ENCODE measurements at regions of chr5 and their contacts with region 1.

Region 1: DNA sequence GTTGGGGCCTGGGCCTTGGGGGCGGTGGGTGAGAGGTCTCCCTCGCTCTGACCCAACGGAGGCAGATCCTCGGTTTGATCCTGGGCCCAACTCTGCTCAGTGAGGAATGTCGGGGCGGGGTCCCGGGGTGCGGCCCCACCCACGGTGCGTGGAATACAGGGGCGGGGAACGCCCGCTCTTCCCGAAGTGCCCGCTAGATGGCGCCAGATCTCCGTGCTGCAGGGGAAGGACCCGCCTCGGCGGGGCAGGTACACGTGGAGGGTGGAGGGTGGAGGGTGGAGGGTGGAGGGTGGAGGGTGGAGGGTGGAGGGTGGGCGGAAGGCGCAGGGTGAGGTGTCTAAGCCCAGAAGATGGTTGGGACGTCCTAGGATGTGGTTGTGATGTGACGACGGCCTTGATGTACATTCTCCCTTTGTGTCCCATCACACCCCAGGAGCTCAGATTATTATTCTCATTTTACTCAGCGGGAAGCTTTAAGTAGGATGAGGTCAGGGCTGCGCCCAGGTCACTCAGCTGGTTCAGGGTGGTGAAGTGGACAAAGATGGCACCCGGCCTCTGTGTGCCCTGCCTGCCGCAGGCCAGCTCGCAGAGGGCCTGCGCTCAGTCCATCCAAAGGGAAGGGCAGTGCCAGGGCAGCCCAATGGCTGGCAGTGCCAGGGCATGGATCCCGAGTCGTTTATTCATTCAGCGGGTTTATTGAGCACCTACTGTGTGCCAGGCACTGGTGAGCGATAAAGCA is 9.4 kb upstream of the RPS14 start:
- DNase-seq: peak; percentile 58 to 68 (median 60)
- H3K4me3 ChIP-seq: no peak overlapping the region
- H3K4me3 Mint-ChIP-seq: peak overlapping the region in 1 of 2 donors; percentile 60
- H3K27ac ChIP-seq: no peak overlapping the region
- H3K27ac Mint-ChIP-seq: peak overlapping the region in 4 of 7 donors; percentile 4 to 82 (median 24)
- H3K4me1 ChIP-seq: peaks cover 28 to 29% of the 10 kb centered on the region in 2 donors
- H3K4me1 Mint-ChIP-seq: peaks cover 32% of the 10 kb centered on the region
- H3K27me3 ChIP-seq: no peaks in the 10 kb centered on the region
- H3K27me3 Mint-ChIP-seq: peaks cover 2 to 7% (median 5%) of the 10 kb centered on the region in 3 donors
- CTCF ChIP-seq: peak; percentile 80

Region 2: DNA sequence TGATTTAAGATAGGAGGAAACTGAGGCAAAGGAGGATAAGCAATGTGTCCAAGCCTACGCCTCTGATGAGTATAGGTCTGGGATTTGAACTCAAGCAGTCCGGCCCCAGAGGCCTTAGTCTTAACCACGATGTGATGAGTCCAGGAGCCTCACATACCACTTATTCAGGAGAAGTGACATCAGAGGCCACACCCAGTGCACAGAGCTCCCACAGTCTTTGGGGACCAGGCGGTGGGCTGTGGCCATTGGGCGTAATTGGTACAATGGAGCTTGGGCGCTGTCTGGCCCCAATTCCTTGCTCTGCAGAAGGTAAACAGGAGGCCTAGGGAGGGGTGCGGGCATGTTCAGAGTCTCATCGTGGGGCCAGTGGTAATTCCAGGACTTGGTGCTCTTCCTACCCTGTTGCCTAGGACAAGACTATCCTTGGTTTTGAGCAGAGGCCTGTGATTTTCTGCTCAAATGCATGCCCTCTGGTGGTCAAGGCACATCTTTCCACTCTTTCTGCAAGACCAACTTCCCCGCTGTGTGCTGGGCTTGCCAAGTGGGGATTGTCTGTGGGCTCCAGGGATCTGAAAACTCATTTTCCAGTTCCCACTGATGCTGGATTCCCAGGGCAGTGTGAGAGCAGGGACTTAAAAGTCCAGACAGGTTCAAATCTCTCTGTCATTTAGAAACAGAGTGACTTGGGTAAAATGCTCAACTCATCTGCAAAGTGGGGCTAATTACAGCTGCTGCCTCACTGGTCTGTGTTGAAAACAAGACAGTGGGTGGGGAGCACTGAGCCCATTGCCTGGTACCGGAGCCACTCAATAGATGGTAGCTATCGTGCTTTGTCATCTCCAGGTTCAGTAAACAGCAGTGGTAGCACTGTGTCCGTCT is 64.7 kb after region 1 on chr5:
- intact Hi-C with region 1: loop called (anchors 1 to 5 kb)
- DNase-seq: peak; percentile 44 to 64 (median 55)
- H3K4me3 ChIP-seq: no peak overlapping the region
- H3K4me3 Mint-ChIP-seq: no peak overlapping the region
- H3K27ac ChIP-seq: no peak overlapping the region
- H3K27ac Mint-ChIP-seq: peak overlapping the region in 2 of 7 donors; percentile 76
- H3K4me1 ChIP-seq: no peaks in the 10 kb centered on the region
- H3K4me1 Mint-ChIP-seq: peaks cover 13% of the 10 kb centered on the region
- H3K27me3 ChIP-seq: no peaks in the 10 kb centered on the region
- H3K27me3 Mint-ChIP-seq: peaks cover 0 to 2% (median 0%) of the 10 kb centered on the region in 3 donors
- CTCF ChIP-seq: peak; percentile 69

Region 3: GRCh38 chr5:150544611-150545219 is 85.7 kb after region 1 on chr5:
- intact Hi-C with region 1: loop called in 1 of 2 experiments (anchors 5 kb)
- DNase-seq: peak; percentile 42 to 63 (median 61)
- H3K4me3 ChIP-seq: no peak overlapping the region
- H3K4me3 Mint-ChIP-seq: no peak overlapping the region
- H3K27ac ChIP-seq: no peak overlapping the region
- H3K27ac Mint-ChIP-seq: peak overlapping the region in 1 of 7 donors; percentile 81
- H3K4me1 ChIP-seq: no peaks in the 10 kb centered on the region
- H3K4me1 Mint-ChIP-seq: peaks cover 7% of the 10 kb centered on the region
- H3K27me3 ChIP-seq: no peaks in the 10 kb centered on the region
- H3K27me3 Mint-ChIP-seq: peaks cover 0 to 2% (median 1%) of the 10 kb centered on the region in 3 donors
- CTCF ChIP-seq: peak; percentile 93

Measured in CD14-positive monocyte (primary cell).